ENCODE measurements at regions of chr2 and their contacts with region 1.

Region 1: GRCh38 chr2:30862054-30862651 is 54.9 kb upstream of the CAPN13 start:
- DNase-seq: peak; percentile 38
- H3K4me3 ChIP-seq: no peak overlapping the region
- H3K27ac ChIP-seq: no peak overlapping the region
- H3K4me1 ChIP-seq: no peaks in the 10 kb centered on the region
- H3K27me3 ChIP-seq: no peaks in the 10 kb centered on the region
- CTCF ChIP-seq: peak in 3 of 4 experiments; percentile 44 to 57 (median 53)
- POLR2A ChIP-seq: no peak

Region 2: GRCh38 chr2:30670453-30670852 is 191.7 kb before region 1 on chr2:
- intact Hi-C with region 1: no loop called
- DNase-seq: no peak
- H3K4me3 ChIP-seq: no peak overlapping the region
- H3K27ac ChIP-seq: no peak overlapping the region
- H3K4me1 ChIP-seq: no peaks in the 10 kb centered on the region
- H3K27me3 ChIP-seq: no peaks in the 10 kb centered on the region
- CTCF ChIP-seq: no peak
- POLR2A ChIP-seq: no peak

Region 3: DNA sequence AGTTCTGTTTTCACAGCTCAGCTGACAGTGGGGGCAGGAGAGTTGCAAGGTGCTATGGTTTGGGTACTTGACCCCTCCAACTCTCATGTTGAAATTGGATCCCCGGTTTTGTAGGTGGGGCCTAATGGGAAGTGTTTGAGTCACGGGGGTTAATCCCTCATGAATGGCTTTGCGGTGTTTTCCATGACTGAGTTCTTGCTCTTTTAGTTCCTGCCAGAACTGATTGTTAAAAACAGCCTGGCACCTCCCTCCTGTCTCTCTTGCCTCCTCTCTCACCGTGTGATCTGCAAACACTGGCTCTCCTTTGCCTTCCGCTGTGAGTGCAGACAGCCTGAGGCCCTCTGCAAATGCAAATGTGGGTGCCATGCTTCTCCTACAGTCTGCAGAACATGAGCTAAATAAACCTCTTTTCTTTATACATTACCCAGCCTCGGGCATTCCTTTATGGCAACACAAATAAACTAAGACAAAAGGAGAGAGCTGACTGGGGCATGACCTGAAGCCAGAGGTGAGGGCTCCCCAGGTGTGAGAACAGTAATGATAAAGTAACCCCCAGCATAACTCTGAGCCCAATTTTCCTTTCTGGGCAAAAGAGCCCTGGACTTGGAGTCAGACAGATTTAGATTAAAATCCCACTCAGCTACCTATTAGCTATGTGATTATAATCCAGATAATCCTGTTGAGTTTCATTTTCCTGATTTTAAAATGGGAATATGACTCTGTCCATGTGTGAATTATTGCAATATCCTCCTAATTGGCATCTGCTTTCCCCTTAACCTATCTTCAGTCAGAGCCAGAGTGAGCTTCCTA is 10.0 kb after region 1 on chr2:
- intact Hi-C with region 1: loop called (anchors 2 kb)
- DNase-seq: no peak
- H3K4me3 ChIP-seq: no peak overlapping the region
- H3K27ac ChIP-seq: no peak overlapping the region
- H3K4me1 ChIP-seq: no peaks in the 10 kb centered on the region
- H3K27me3 ChIP-seq: no peaks in the 10 kb centered on the region
- CTCF ChIP-seq: no peak
- POLR2A ChIP-seq: no peak

Measured in prostate gland (tissue), 2 donors.